SK-N-SH (cell line): ENCODE measurements at regions of chr5 and their contacts with region 1.

Region 1: DNA sequence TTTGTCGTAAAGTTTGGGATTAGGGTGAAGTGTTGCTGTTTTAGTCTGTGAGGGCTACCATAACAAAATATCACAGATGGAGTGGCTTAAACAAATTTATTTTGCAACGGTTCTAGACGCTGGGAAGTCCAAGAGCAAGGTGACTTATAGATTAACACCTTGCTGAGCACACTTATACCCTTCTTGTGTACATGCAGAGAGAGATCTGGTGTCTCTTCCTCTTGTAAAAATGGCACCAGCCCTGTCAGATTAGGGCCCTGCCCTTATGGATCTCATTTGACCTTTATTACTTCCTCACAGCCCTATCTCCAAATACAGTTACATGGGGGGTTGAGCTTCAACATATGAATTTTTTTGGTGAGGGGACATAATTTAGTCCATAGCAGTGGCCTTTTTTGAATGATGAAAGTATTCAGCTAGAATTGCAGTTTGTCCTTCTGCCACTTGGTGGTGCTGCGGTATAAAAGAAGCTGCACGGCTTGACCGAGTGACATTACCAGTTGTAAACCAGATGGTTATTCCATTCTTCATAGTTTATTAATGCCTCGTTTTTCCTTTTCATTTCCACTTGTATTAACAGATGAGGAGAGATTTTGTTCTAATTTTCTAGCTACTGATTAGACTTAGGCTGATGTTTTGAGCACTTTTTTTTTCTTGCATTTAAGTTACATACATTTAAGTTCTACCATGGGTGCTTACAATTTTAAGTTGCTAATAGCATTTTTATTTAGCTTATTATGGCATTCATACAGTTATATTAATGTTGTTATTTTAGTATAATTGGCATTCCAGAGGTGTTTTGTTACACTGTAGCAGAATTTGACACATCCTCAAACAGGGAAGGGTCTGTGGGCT is 19.4 kb downstream of the DCP2 start:
- DNase-seq: peak; percentile 56
- H3K4me3 ChIP-seq: no peak overlapping the region; a peak in 1 of 4 replicates
- H3K27ac ChIP-seq: no peak overlapping the region; a peak in 1 of 4 replicates
- H3K4me1 ChIP-seq: no peaks in the 10 kb centered on the region; a peak in 2 of 4 replicates
- H3K27me3 ChIP-seq: no peaks in the 10 kb centered on the region
- CTCF ChIP-seq: peak; percentile 95
- EP300 ChIP-seq: no peak
- RAD21 ChIP-seq: peak; percentile 96

Region 2: DNA sequence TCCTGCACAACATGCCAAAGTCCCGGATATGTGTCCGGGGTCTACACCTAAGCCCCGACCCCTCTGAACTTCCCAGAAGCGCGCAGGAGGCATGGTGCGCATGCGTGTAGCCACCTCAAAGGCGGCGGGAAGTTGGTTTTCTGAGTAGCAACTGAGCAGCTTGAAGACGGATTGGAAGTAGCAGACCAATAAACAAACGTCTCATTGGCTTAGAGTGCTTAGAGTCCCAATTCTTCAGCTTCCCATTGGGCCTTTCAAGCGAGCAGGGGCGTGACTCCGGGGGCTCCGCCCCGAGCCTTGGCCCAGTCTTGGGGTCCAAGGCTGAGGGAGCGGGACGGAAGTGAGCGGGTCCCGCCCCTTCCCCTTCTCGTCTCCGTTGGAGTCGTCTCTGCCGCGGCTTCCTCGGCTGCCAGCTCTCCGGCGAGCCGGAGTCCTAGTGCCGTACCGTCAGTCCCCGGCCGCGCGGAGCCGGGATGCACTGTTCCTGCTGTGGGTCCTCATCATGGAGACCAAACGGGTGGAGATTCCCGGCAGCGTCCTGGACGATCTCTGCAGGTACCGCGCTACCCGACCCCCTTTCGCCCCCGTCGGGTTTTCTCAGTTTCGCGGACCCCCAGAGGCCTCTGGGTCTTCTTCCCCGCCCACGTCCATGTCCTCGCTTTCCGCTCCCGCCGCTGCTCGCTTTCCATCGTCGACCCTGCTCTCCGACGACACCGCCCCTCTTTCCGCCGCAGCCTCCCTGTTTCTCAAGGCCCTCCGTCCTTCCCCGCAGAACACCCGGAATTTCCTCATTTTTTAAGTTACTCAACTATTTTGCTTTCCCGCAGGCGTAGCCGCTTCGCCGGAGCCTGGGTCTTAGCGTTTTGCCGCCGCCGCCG is 19.3 kb before region 1 on chr5 and contains the start of gene DCP2:
- CTCF ChIA-PET with region 1: interaction called, 29 read pairs
- POLR2A ChIA-PET with region 1: interaction called, 5 read pairs
- DNase-seq: peak; percentile 94
- H3K4me3 ChIP-seq: peak within 1 kb of the TSS; percentile 80 to 92
- H3K27ac ChIP-seq: peak within 1 kb of the TSS; percentile 87 to 96
- H3K4me1 ChIP-seq: peaks cover 18 to 22% of the 10 kb centered on the region in 2 experiments; a peak in 3 of 4 replicates
- H3K27me3 ChIP-seq: no peaks in the 10 kb centered on the region
- CTCF ChIP-seq: no peak
- EP300 ChIP-seq: peak; percentile 16 to 67; a peak in 2 of 4 replicates
- RAD21 ChIP-seq: no peak
- polyA plus RNA-seq, gene DCP2: 6.0 and 6.9 TPM in 2 replicates

Region 3: GRCh38 chr5:113022661-113023060 is 26.7 kb after region 1 on chr5:
- CTCF ChIA-PET with region 1: interaction called, 17 read pairs
- POLR2A ChIA-PET with region 1: no interaction called
- DNase-seq: no peak
- H3K4me3 ChIP-seq: no peak overlapping the region
- H3K27ac ChIP-seq: no peak overlapping the region; a peak in 1 of 4 replicates
- H3K4me1 ChIP-seq: peaks cover 2 to 8% of the 10 kb centered on the region in 2 experiments; a peak in 3 of 4 replicates
- H3K27me3 ChIP-seq: no peaks in the 10 kb centered on the region
- CTCF ChIP-seq: no peak
- EP300 ChIP-seq: no peak
- RAD21 ChIP-seq: no peak

Region 4: DNA sequence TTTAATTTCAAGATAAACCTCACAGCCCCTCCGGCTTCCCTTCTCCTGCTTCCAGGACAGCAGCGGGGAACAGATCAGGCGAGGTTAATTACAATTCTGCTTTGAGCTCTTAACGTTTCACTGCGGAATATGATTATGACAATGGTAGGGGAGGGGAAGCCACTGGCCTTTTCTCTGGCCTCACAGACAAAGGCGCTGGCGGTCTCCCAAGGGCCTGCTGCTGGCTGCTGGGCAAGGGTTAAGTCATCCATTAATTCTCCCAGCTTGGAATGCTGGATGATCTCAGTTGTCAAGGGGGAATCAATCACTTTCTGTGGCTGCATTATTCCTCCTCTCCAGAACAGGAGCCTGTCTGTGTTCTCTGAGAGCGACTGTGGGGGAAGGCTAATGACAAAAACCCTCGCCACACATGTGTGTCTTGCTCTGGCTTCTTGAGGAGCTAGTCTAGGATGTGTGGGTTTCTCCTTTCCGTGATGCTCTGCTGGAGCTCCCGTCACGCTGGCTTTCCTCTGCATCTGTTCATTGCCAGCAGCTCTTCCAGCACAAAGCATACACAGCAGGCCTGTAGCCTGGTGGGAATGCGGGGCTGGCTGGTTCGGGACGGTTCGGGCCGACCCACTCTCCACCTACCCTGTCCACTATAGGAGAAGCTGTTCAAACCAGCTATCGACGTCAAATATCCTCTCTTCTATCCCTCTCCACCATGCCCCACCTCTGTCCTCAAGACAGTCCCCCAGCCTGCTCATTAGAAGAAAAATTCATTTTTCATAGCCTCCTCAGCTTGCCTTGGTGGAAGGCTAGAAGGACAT is 63.4 kb after region 1 on chr5:
- CTCF ChIA-PET with region 1: interaction called, 12 read pairs
- POLR2A ChIA-PET with region 1: no interaction called
- DNase-seq: peak; percentile 86
- H3K4me3 ChIP-seq: no peak overlapping the region
- H3K27ac ChIP-seq: peak overlapping the region; percentile 55 to 98
- H3K4me1 ChIP-seq: peaks cover 18 to 70% of the 10 kb centered on the region in 2 experiments
- H3K27me3 ChIP-seq: no peaks in the 10 kb centered on the region
- CTCF ChIP-seq: no peak
- EP300 ChIP-seq: peak; percentile 70 to 85; a peak in 3 of 4 replicates
- RAD21 ChIP-seq: peak; percentile 29

Region 5: DNA sequence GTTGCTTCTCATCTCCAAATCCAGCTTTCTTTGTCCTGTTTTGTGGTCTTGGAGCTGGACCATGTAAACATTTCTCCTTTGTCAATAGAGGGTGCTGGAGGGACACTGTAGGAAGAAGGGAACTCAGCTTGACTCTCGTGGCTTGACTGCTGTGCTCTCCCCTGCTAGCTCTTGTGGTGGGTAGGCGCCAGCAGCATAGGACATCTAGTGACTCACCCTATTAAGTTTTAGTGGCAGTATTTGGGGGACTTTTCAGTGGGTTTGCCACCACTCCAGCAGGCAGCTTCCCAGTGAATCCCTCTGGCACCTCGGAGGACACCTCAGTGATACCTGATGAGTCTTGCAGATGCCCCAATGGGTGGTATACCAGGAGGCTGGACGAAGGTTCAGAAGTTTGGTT is 341.0 kb after region 1 on chr5:
- CTCF ChIA-PET with region 1: interaction called, 19 read pairs
- POLR2A ChIA-PET with region 1: no interaction called
- DNase-seq: peak; percentile 22
- H3K4me3 ChIP-seq: no peak overlapping the region
- H3K27ac ChIP-seq: no peak overlapping the region
- H3K4me1 ChIP-seq: peaks cover 0 to 7% of the 10 kb centered on the region in 2 experiments; a peak in 1 of 4 replicates
- H3K27me3 ChIP-seq: no peaks in the 10 kb centered on the region
- CTCF ChIP-seq: peak; percentile 34
- EP300 ChIP-seq: no peak
- RAD21 ChIP-seq: peak; percentile 84

Region 6: GRCh38 chr5:113513384-113514288 is 517.6 kb after region 1 on chr5 and contains the start of gene YTHDC2:
- CTCF ChIA-PET with region 1: interaction called, 77 read pairs
- POLR2A ChIA-PET with region 1: no interaction called
- DNase-seq: peak; percentile 89
- H3K4me3 ChIP-seq: peak within 1 kb of the TSS; percentile 78 to 92
- H3K27ac ChIP-seq: peak within 1 kb of the TSS; percentile 83
- H3K4me1 ChIP-seq: peaks cover 0 to 6% of the 10 kb centered on the region in 2 experiments; a peak in 2 of 4 replicates
- H3K27me3 ChIP-seq: no peaks in the 10 kb centered on the region; the same call in 1 of the 2 replicates
- CTCF ChIP-seq: peak; percentile 51
- EP300 ChIP-seq: no peak
- RAD21 ChIP-seq: peak; percentile 71
- polyA plus RNA-seq, gene YTHDC2: 3.5 and 4.7 TPM in 2 replicates

Region 7: DNA sequence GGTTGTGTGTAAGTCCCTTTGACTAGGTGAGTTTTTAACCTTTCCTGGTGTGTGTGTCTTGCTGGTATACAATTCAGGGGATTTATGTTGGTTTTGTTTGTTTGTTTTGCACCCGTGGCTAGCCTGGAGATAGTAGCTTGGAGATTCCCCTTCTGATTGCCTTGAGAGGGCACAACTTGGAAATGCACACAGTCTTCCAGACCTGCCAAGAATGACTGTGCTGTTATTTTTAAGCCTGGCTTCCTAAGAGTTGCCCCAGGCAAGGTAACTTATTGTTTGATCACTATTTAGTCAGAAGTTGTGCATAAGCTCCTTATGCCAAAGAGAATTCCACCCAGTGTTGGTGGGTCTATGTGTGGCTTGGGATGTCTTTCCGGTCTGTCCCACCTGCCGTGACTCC is 944.0 kb after region 1 on chr5:
- CTCF ChIA-PET with region 1: no interaction called
- POLR2A ChIA-PET with region 1: no interaction called
- DNase-seq: no peak
- H3K4me3 ChIP-seq: no peak overlapping the region
- H3K27ac ChIP-seq: no peak overlapping the region
- H3K4me1 ChIP-seq: no peaks in the 10 kb centered on the region
- H3K27me3 ChIP-seq: no peaks in the 10 kb centered on the region
- CTCF ChIP-seq: no peak
- EP300 ChIP-seq: no peak
- RAD21 ChIP-seq: no peak